ENCODE measurements at regions of chr1 and their contacts with region 1.

Region 1: GRCh38 chr1:153345187-153346076 is 3.2 kb downstream of the PGLYRP4 start:
- DNase-seq: no peak
- ATAC-seq: no peak
- H3K4me3 ChIP-seq: no peak overlapping the region
- H3K27ac ChIP-seq: no peak overlapping the region
- H3K4me1 ChIP-seq: no peaks in the 10 kb centered on the region
- H3K27me3 ChIP-seq: no peaks in the 10 kb centered on the region
- CTCF ChIP-seq: no peak
- POLR2A ChIP-seq: no peak

Region 2: DNA sequence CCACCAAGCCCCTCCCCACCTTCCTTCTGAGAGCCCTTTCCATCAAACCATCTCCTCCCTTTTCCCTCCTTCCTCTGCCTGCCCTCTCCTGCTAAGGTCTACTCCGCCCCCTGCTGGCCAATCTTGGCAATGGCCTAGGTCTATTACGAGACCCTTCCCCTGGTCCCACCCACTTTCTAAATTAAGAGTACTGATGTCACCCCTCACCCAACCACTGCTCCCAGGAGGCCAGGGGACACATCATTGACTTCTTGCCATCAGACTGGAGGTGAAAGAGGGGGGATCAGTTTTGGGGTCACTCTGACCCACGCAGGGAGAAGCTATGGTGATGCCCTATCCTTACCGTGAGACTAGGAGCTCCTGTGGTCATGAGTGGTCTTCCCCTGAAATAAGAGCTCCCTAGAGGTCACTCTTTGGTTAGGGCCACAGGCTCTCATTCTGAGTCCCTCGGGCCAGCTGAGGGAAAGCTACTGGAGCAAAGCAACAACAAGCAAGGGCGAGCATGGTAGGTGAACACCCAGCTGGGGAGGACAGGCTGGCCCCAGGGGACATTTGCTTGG is 149.6 kb after region 1 on chr1:
- intact Hi-C with region 1: loop called (anchors 5 kb)
- DNase-seq: peak; percentile 73 to 74 (median 73)
- ATAC-seq: peak; percentile 70 to 77 (median 71)
- H3K4me3 ChIP-seq: no peak overlapping the region
- H3K27ac ChIP-seq: no peak overlapping the region
- H3K4me1 ChIP-seq: no peaks in the 10 kb centered on the region
- H3K27me3 ChIP-seq: no peaks in the 10 kb centered on the region
- CTCF ChIP-seq: peak; percentile 82 to 91 (median 89)
- POLR2A ChIP-seq: no peak

Measured in right lobe of liver (tissue), 6 donors.